ENCODE measurements at regions of chr3 and their contacts with region 1.

Region 1: GRCh38 chr3:177499779-177500423 is 302.6 kb upstream of the TBL1XR1 start:
- DNase-seq: peak; percentile 96
- ATAC-seq: peak; percentile 96
- H3K4me3 ChIP-seq: peak overlapping the region; percentile 32 to 54 (median 49); a peak in 5 of 6 replicates
- H3K27ac ChIP-seq: peak overlapping the region; percentile 95
- H3K4me1 ChIP-seq: peaks cover 44% of the 10 kb centered on the region
- H3K27me3 ChIP-seq: no peaks in the 10 kb centered on the region
- CTCF ChIP-seq: peak; percentile 61
- EP300 ChIP-seq: peak in 1 of 2 experiments; percentile 70; a peak in 1 of 4 replicates
- POLR2A ChIP-seq: peak in 1 of 2 experiments; percentile 56; a peak in 2 of 4 replicates
- RAD21 ChIP-seq: 0 out of 2 replicates have a peak, but pooled peaks have one; percentile 19

Region 2: GRCh38 chr3:177516158-177517011 is 16.5 kb after region 1 on chr3:
- CTCF ChIA-PET with region 1: no interaction called
- POLR2A ChIA-PET with region 1: interaction called, 16 read pairs
- in situ Hi-C with region 1: no loop called
- intact Hi-C with region 1: no loop called
- DNase-seq: peak; percentile 74
- ATAC-seq: peak; percentile 91
- H3K4me3 ChIP-seq: peak overlapping the region in 1 of 3 experiments; percentile 29; a peak in 1 of 6 replicates
- H3K27ac ChIP-seq: peak overlapping the region; percentile 55
- H3K4me1 ChIP-seq: peaks cover 61% of the 10 kb centered on the region
- H3K27me3 ChIP-seq: no peaks in the 10 kb centered on the region
- CTCF ChIP-seq: no peak
- EP300 ChIP-seq: peak in 1 of 2 experiments; percentile 61; a peak in 2 of 4 replicates
- POLR2A ChIP-seq: no peak
- RAD21 ChIP-seq: no peak

Region 3: DNA sequence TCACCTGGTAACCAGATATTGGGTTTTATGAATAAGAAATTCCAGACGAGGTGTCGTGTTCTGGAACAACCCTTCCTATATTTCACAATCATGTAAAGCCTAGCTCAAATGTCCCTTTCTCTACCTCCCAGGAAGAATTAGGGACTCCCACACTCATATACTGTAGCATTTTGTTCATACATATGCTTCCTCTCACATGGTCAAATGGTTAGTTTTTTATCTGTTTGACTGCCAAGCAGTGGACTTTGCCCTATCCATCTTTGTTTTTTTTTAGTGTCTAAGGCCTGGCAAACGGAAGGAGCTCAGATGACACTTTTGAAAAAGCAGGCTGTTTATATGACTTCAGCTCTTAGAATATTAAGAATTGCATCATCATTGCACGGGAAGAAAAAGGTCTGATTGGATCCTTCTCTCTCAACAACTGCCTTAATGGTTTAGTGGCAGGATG is 24.1 kb after region 1 on chr3:
- CTCF ChIA-PET with region 1: no interaction called
- POLR2A ChIA-PET with region 1: interaction called, 11 read pairs
- in situ Hi-C with region 1: no loop called
- intact Hi-C with region 1: loop called (anchors 1 kb)
- DNase-seq: peak; percentile 88
- ATAC-seq: peak; percentile 84
- H3K4me3 ChIP-seq: peak overlapping the region in 1 of 3 experiments; percentile 13; a peak in 1 of 6 replicates
- H3K27ac ChIP-seq: peak overlapping the region; percentile 56
- H3K4me1 ChIP-seq: peaks cover 72% of the 10 kb centered on the region
- H3K27me3 ChIP-seq: no peaks in the 10 kb centered on the region
- CTCF ChIP-seq: no peak
- EP300 ChIP-seq: peak in 1 of 2 experiments; percentile 78; a peak in 2 of 4 replicates
- POLR2A ChIP-seq: no peak
- RAD21 ChIP-seq: no peak

Measured in HepG2 (cell line).